Naive thymus-derived CD4-positive, alpha-beta T cell (primary cell): ENCODE measurements at regions of chr6 and their contacts with region 1.

Region 1: GRCh38 chr6:37698261-37699137 is 816 bp upstream of the MDGA1 start:
- DNase-seq: peak; percentile 33 to 69 (median 57)
- ATAC-seq: peak; percentile 23
- H3K4me3 ChIP-seq: peak overlapping the region; percentile 79
- H3K4me3 Mint-ChIP-seq: peak overlapping the region; percentile 96 to 100 (median 98)
- H3K27ac ChIP-seq: peak overlapping the region; percentile 57
- H3K27ac Mint-ChIP-seq: peak overlapping the region; percentile 93 to 99 (median 98)
- H3K4me1 ChIP-seq: peaks cover 11 to 12% of the 10 kb centered on the region in 2 donors
- H3K4me1 Mint-ChIP-seq: peaks cover 20 to 36% (median 26%) of the 10 kb centered on the region in 7 donors
- H3K27me3 ChIP-seq: no peaks in the 10 kb centered on the region
- H3K27me3 Mint-ChIP-seq: peaks cover 25 to 81% (median 38%) of the 10 kb centered on the region in 5 donors

Region 2: DNA sequence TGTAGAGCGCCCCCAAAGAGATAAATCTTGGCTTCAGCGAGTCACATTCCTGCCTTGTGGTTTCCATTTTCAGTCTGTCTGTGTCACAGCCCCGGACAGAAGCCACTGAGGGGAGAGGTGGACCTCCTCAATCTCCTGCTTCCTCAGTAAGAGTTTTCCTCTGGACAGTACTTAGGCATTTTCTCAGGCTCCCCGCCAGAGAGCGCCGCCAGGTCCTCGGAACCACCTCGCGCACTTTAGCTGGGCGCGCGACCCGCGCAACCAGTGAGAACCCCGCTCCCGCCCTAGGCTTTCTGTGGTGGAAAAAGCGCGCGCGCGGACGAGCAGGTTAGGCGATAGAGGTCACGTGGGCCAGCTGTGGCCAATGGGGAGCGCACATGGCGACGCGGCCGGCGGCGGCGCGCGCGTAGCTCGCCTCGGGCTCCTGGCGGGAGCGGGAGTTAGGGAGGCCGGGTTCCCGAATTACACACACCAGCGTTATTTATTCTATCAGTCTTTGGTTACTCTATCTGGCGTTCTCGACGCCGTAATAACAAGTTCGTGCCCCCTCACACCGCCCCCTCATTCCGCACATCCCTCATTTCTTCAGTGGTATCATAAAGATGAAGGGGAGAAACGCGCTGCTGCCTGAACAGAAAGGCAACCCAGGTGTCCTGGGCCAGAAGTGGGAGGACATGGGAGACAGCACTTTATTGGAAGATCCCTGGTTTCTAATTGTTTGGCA is 1275.2 kb before region 1 on chr6:
- CTCF ChIA-PET with region 1: no interaction called
- POLR2A ChIA-PET with region 1: no interaction called
- intact Hi-C with region 1: loop called in 1 of 2 experiments (anchors 5 kb)
- DNase-seq: peak; percentile 94 to 98 (median 97)
- ATAC-seq: peak; percentile 99
- H3K4me3 ChIP-seq: peak overlapping the region; percentile 70
- H3K4me3 Mint-ChIP-seq: peak overlapping the region; percentile 85 to 96 (median 94)
- H3K27ac ChIP-seq: peak overlapping the region; percentile 75
- H3K27ac Mint-ChIP-seq: peak overlapping the region; percentile 84 to 97 (median 93)
- H3K4me1 ChIP-seq: peaks cover 0 to 10% of the 10 kb centered on the region in 2 donors
- H3K4me1 Mint-ChIP-seq: peaks cover 10 to 21% (median 18%) of the 10 kb centered on the region in 7 donors
- H3K27me3 ChIP-seq: no peaks in the 10 kb centered on the region
- H3K27me3 Mint-ChIP-seq: no peaks in the 10 kb centered on the region

Region 3: GRCh38 chr6:36759148-36759759 is 939.2 kb before region 1 on chr6:
- CTCF ChIA-PET with region 1: no interaction called
- POLR2A ChIA-PET with region 1: no interaction called
- intact Hi-C with region 1: no loop called
- DNase-seq: peak; percentile 39 to 88 (median 63)
- ATAC-seq: peak; percentile 67
- H3K4me3 ChIP-seq: no peak overlapping the region
- H3K4me3 Mint-ChIP-seq: no peak overlapping the region
- H3K27ac ChIP-seq: no peak overlapping the region
- H3K27ac Mint-ChIP-seq: peak overlapping the region in 3 of 9 donors; percentile 3 to 43 (median 25)
- H3K4me1 ChIP-seq: peaks cover 16 to 36% of the 10 kb centered on the region in 2 donors
- H3K4me1 Mint-ChIP-seq: peaks cover 17 to 51% (median 33%) of the 10 kb centered on the region in 7 donors
- H3K27me3 ChIP-seq: no peaks in the 10 kb centered on the region
- H3K27me3 Mint-ChIP-seq: peaks cover 0 to 2% (median 0%) of the 10 kb centered on the region in 5 donors

Region 4: GRCh38 chr6:37324131-37325033 is 374.1 kb before region 1 on chr6:
- CTCF ChIA-PET with region 1: no interaction called
- POLR2A ChIA-PET with region 1: no interaction called
- intact Hi-C with region 1: loop called in 1 of 2 experiments (anchors 1 kb)
- DNase-seq: no peak
- ATAC-seq: no peak
- H3K4me3 ChIP-seq: no peak overlapping the region
- H3K4me3 Mint-ChIP-seq: no peak overlapping the region
- H3K27ac ChIP-seq: no peak overlapping the region
- H3K27ac Mint-ChIP-seq: peak overlapping the region in 5 of 9 donors; percentile 2 to 48 (median 11)
- H3K4me1 ChIP-seq: no peaks in the 10 kb centered on the region
- H3K4me1 Mint-ChIP-seq: peaks cover 0 to 16% (median 4%) of the 10 kb centered on the region in 7 donors
- H3K27me3 ChIP-seq: no peaks in the 10 kb centered on the region
- H3K27me3 Mint-ChIP-seq: no peaks in the 10 kb centered on the region

Region 5: DNA sequence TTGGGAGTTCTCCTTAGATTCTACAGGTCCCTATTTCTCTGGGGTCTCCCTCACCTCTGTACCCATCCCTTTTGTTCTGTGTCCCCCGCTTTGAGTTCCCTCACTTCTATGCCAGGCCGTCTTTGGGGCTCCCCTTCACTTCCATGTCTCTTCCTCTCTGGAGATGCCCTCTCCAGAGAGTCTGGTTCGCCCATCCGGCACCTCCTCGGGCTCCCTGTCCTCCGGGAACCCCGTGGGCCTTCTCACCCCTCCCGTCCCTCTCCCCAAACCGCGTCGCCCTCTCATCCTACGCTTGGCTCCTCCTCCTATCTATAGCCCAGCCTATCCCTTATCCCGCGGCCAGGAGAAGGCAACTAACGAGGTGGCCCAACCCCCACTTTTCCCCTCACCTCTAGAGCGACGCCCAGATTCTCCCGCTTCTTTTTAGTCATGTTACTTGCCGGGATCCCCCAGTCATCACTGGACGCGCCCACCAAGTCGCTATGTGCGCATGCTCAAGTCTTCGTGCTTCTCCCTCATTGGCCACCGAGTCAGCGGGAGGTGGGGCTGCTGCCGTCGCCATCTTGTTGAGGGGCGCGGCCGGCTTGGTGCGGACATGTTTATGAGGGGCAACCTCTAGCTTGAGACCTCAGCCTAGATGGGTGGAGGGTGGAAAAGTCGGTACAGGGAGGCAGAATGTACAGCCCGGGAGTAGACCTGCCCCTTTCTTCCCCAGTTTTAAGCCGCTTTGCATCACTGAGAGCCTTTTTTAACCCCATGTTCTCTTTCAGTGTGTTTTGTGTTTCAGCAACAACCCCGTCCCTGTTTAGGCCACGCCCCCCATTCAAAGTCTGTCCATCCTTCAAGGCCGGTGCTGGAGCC is 198.8 kb before region 1 on chr6 and contains the start of gene CCDC167:
- CTCF ChIA-PET with region 1: no interaction called
- POLR2A ChIA-PET with region 1: no interaction called
- intact Hi-C with region 1: loop called (anchors 5 kb)
- DNase-seq: peak; percentile 86 to 96 (median 90)
- ATAC-seq: peak; percentile 76
- H3K4me3 ChIP-seq: peak within 1 kb of the TSS; percentile 78
- H3K4me3 Mint-ChIP-seq: peak within 1 kb of the TSS; percentile 90 to 100 (median 98)
- H3K27ac ChIP-seq: peak within 1 kb of the TSS; percentile 91
- H3K27ac Mint-ChIP-seq: peak within 1 kb of the TSS; percentile 84 to 99 (median 95)
- H3K4me1 ChIP-seq: peaks cover 60 to 67% of the 10 kb centered on the region in 2 donors
- H3K4me1 Mint-ChIP-seq: peaks cover 60 to 93% (median 85%) of the 10 kb centered on the region in 7 donors
- H3K27me3 ChIP-seq: no peaks in the 10 kb centered on the region
- H3K27me3 Mint-ChIP-seq: no peaks in the 10 kb centered on the region
- total RNA-seq, gene CCDC167: 13.8 to 55.1 (median 18.0) TPM

Region 6: GRCh38 chr6:37679539-37680476 is 18.7 kb before region 1 on chr6:
- CTCF ChIA-PET with region 1: no interaction called
- POLR2A ChIA-PET with region 1: no interaction called
- intact Hi-C with region 1: no loop called
- DNase-seq: no peak
- ATAC-seq: peak; percentile 39
- H3K4me3 ChIP-seq: no peak overlapping the region
- H3K4me3 Mint-ChIP-seq: no peak overlapping the region
- H3K27ac ChIP-seq: no peak overlapping the region
- H3K27ac Mint-ChIP-seq: no peak overlapping the region
- H3K4me1 ChIP-seq: no peaks in the 10 kb centered on the region
- H3K4me1 Mint-ChIP-seq: peaks cover 0 to 3% (median 0%) of the 10 kb centered on the region in 7 donors
- H3K27me3 ChIP-seq: no peaks in the 10 kb centered on the region
- H3K27me3 Mint-ChIP-seq: peaks cover 0 to 9% (median 2%) of the 10 kb centered on the region in 5 donors

Region 7: GRCh38 chr6:37731888-37732287 is 33.4 kb after region 1 on chr6:
- CTCF ChIA-PET with region 1: no interaction called
- POLR2A ChIA-PET with region 1: no interaction called
- intact Hi-C with region 1: no loop called
- DNase-seq: peak in 6 of 9 donors; percentile 17 to 37 (median 32)
- ATAC-seq: peak; percentile 51
- H3K4me3 ChIP-seq: no peak overlapping the region
- H3K4me3 Mint-ChIP-seq: no peak overlapping the region
- H3K27ac ChIP-seq: no peak overlapping the region
- H3K27ac Mint-ChIP-seq: peak overlapping the region in 1 of 9 donors; percentile 14
- H3K4me1 ChIP-seq: peaks cover 0 to 4% of the 10 kb centered on the region in 2 donors
- H3K4me1 Mint-ChIP-seq: peaks cover 3 to 12% (median 8%) of the 10 kb centered on the region in 7 donors
- H3K27me3 ChIP-seq: no peaks in the 10 kb centered on the region
- H3K27me3 Mint-ChIP-seq: no peaks in the 10 kb centered on the region

Region 8: GRCh38 chr6:37761554-37762263 is 63.2 kb after region 1 on chr6:
- CTCF ChIA-PET with region 1: no interaction called
- POLR2A ChIA-PET with region 1: no interaction called
- intact Hi-C with region 1: no loop called
- DNase-seq: no peak
- ATAC-seq: no peak
- H3K4me3 ChIP-seq: no peak overlapping the region
- H3K4me3 Mint-ChIP-seq: no peak overlapping the region
- H3K27ac ChIP-seq: no peak overlapping the region
- H3K27ac Mint-ChIP-seq: no peak overlapping the region
- H3K4me1 ChIP-seq: no peaks in the 10 kb centered on the region
- H3K4me1 Mint-ChIP-seq: peaks cover 0 to 8% (median 0%) of the 10 kb centered on the region in 7 donors
- H3K27me3 ChIP-seq: no peaks in the 10 kb centered on the region
- H3K27me3 Mint-ChIP-seq: peaks cover 0 to 13% (median 0%) of the 10 kb centered on the region in 5 donors

Region 9: GRCh38 chr6:37860226-37860839 is 161.8 kb after region 1 on chr6:
- CTCF ChIA-PET with region 1: no interaction called
- POLR2A ChIA-PET with region 1: no interaction called
- intact Hi-C with region 1: loop called in 1 of 2 experiments (anchors 5 kb)
- DNase-seq: peak in 3 of 9 donors; percentile 10 to 24 (median 15)
- ATAC-seq: no peak
- H3K4me3 ChIP-seq: no peak overlapping the region
- H3K4me3 Mint-ChIP-seq: no peak overlapping the region
- H3K27ac ChIP-seq: no peak overlapping the region
- H3K27ac Mint-ChIP-seq: no peak overlapping the region
- H3K4me1 ChIP-seq: peaks cover 2 to 16% of the 10 kb centered on the region in 2 donors
- H3K4me1 Mint-ChIP-seq: peaks cover 33 to 86% (median 58%) of the 10 kb centered on the region in 7 donors
- H3K27me3 ChIP-seq: no peaks in the 10 kb centered on the region
- H3K27me3 Mint-ChIP-seq: no peaks in the 10 kb centered on the region

Region 10: GRCh38 chr6:38570750-38571149 is 872.3 kb after region 1 on chr6:
- CTCF ChIA-PET with region 1: no interaction called
- POLR2A ChIA-PET with region 1: no interaction called
- intact Hi-C with region 1: loop called in 1 of 2 experiments (anchors 2 kb)
- DNase-seq: peak in 4 of 9 donors; percentile 7 to 20 (median 10)
- ATAC-seq: no peak
- H3K4me3 ChIP-seq: no peak overlapping the region
- H3K4me3 Mint-ChIP-seq: peak overlapping the region in 3 of 10 donors; percentile 9 to 77 (median 26)
- H3K27ac ChIP-seq: no peak overlapping the region
- H3K27ac Mint-ChIP-seq: peak overlapping the region in 6 of 9 donors; percentile 68 to 95 (median 89)
- H3K4me1 ChIP-seq: peaks cover 7 to 8% of the 10 kb centered on the region in 2 donors
- H3K4me1 Mint-ChIP-seq: peaks cover 19 to 32% (median 24%) of the 10 kb centered on the region in 7 donors
- H3K27me3 ChIP-seq: no peaks in the 10 kb centered on the region
- H3K27me3 Mint-ChIP-seq: peaks cover 0 to 2% (median 0%) of the 10 kb centered on the region in 5 donors